ENCODE measurements at regions of chr15 and their contacts with region 1.

Region 1: GRCh38 chr15:77070495-77071304 is at the start of gene TSPAN3:
- DNase-seq: peak; percentile 96
- H3K4me3 ChIP-seq: peak within 1 kb of the TSS; percentile 53 to 98 (median 90)
- H3K27ac ChIP-seq: peak within 1 kb of the TSS; percentile 81
- H3K4me1 ChIP-seq: peaks cover 35% of the 10 kb centered on the region
- H3K27me3 ChIP-seq: peaks cover 4% of the 10 kb centered on the region in 2 experiments
- CTCF ChIP-seq: no peak
- POLR2A ChIP-seq: peak; percentile 70
- total RNA-seq, gene TSPAN3: 202 and 215 TPM in 2 replicates

Region 2: DNA sequence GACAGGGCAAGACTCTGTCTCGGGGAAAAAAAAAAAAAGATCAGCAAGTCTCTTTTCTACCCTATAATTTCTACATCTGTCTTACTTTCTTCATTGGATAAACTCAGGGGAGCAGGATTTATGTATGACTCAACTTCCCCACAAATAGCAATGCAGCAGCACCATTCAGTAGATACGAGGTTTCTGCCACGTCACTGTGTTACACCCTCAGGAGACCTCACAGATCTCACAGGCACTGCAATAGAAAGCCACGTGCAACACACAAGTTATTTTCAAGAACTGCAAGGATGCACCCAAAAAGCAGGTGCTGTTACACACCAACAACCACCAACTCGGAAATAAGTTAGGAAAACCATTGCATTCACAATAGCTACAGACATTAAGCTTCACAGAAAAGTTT is 30.0 kb before region 1 on chr15:
- CTCF ChIA-PET with region 1: interaction called, 5 read pairs
- POLR2A ChIA-PET with region 1: no interaction called
- dilution Hi-C with region 1: no loop called
- intact Hi-C with region 1: loop called (anchors 2 kb)
- DNase-seq: peak; percentile 36
- H3K4me3 ChIP-seq: no peak overlapping the region
- H3K27ac ChIP-seq: no peak overlapping the region
- H3K4me1 ChIP-seq: no peaks in the 10 kb centered on the region
- H3K27me3 ChIP-seq: no peaks in the 10 kb centered on the region
- CTCF ChIP-seq: no peak
- POLR2A ChIP-seq: no peak

Region 3: DNA sequence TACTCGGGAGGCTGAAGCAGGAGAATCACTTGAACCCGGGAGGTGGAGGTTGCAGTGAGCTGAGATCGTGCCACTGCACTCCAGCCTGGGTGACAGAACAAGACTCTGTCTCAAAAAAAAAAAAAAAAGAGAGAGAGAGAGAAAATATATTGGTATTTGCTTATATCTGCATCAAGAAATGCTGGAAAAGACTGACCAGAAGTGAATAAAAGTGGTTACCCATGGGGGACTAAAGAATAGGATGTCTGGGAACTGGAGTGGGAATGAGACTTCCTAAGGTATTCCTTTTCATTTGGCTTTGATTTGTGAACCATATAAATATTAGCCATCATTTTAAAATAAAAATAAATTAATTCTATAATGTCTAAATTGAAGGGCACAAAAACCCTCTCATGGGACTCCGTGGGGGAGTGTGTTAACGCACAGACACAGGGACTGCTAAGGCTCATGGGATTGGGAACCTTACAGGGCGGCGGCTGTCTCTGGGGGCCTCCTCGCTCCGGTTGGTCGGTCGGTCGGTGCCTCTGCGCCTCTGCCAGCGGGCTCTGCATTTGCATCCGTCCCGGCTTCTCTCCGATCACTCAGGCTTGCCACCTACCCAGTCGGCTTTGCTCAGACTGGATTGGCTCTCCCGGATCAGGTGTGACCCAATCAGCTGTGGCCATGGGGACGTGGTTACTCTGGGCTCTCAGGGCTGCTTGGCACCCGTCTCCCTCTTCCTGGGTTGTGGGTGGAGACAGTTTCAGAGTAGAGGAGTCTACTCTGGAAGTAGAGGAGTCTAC is 12.9 kb after region 1 on chr15:
- CTCF ChIA-PET with region 1: no interaction called
- POLR2A ChIA-PET with region 1: no interaction called
- dilution Hi-C with region 1: no loop called
- intact Hi-C with region 1: no loop called
- DNase-seq: peak; percentile 34
- H3K4me3 ChIP-seq: peak overlapping the region in 2 of 3 experiments; percentile 13 to 41
- H3K27ac ChIP-seq: no peak overlapping the region
- H3K4me1 ChIP-seq: peaks cover 7% of the 10 kb centered on the region
- H3K27me3 ChIP-seq: no peaks in the 10 kb centered on the region
- CTCF ChIP-seq: no peak
- POLR2A ChIP-seq: no peak